Psoas muscle (tissue), 8 donors: ENCODE measurements at regions of chr18 and their contacts with region 1.

Region 1: GRCh38 chr18:7459851-7460770 is 107.0 kb upstream of the PTPRM start:
- DNase-seq: no peak
- ATAC-seq: peak in 3 of 4 donors; percentile 25 to 58 (median 34)
- H3K4me3 ChIP-seq: peak overlapping the region; percentile 26
- H3K27ac ChIP-seq: no peak overlapping the region
- H3K4me1 ChIP-seq: peaks cover 7% of the 10 kb centered on the region
- H3K27me3 ChIP-seq: no peaks in the 10 kb centered on the region
- CTCF ChIP-seq: no peak

Region 2: GRCh38 chr18:6757931-6758330 is 702.2 kb before region 1 on chr18:
- intact Hi-C with region 1: no loop called
- DNase-seq: no peak
- ATAC-seq: no peak
- H3K4me3 ChIP-seq: no peak overlapping the region
- H3K27ac ChIP-seq: no peak overlapping the region
- H3K4me1 ChIP-seq: no peaks in the 10 kb centered on the region
- H3K27me3 ChIP-seq: no peaks in the 10 kb centered on the region
- CTCF ChIP-seq: no peak

Region 3: GRCh38 chr18:7221424-7222155 is 238.5 kb before region 1 on chr18:
- intact Hi-C with region 1: loop called in 1 of 2 experiments (anchors 10 kb)
- DNase-seq: peak in 1 of 2 donors; percentile 55
- ATAC-seq: peak; percentile 86 to 99 (median 96)
- H3K4me3 ChIP-seq: no peak overlapping the region
- H3K27ac ChIP-seq: no peak overlapping the region
- H3K4me1 ChIP-seq: peaks cover 9% of the 10 kb centered on the region
- H3K27me3 ChIP-seq: no peaks in the 10 kb centered on the region
- CTCF ChIP-seq: peak; percentile 81

Region 4: DNA sequence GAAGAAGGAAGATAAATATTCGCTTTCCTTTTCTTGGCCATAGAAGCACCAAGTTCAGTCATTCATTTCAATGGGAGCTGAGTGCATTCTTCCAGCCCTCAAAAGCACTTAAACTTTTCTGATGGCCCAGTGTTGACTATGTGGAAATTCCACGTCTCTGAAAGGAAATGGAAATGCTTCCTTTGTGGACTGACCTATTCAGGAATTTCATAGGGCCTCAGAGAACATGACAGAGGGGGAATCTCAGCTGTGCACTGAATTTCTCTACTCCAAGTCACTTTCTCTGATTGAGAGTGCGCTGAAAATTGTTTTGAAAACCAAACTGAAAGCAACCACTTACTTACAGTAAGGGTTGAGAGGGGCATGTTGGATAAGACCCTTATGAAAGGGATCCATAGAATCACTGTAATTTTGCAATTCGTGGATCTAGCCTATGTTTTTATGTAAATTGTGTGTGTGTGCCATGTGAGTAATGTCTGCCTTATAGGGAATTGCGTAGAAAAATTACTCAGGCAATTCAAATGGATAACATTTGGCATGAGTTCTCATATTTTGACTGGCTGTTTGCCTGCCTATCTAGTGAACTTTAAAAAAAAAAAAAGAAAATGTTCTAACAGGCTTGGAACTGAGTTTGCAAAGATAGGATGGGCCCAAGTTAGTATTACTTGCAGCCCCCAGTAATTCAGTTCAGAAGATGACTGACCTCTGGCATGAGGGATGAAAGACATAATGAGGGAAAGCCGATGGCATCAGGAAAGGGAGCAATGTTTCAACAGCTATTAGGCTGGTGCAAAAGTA is 544.0 kb after region 1 on chr18:
- intact Hi-C with region 1: no loop called
- DNase-seq: no peak
- ATAC-seq: no peak
- H3K4me3 ChIP-seq: no peak overlapping the region
- H3K27ac ChIP-seq: no peak overlapping the region
- H3K4me1 ChIP-seq: peaks cover 35% of the 10 kb centered on the region
- H3K27me3 ChIP-seq: no peaks in the 10 kb centered on the region
- CTCF ChIP-seq: no peak